Activated CD8-positive, alpha-beta memory T cell treated with anti-CD3 and anti-CD28 coated beads, Interleukin-2, amount 10 ng/mL, durations not matched to agents 7 days and 5 days (primary cell): ENCODE measurements at regions of chr5 and their contacts with region 1.

Region 1: GRCh38 chr5:32092938-32093812 is 80.9 kb downstream of the GOLPH3 start:
- DNase-seq: peak; percentile 78
- ATAC-seq: peak; percentile 93
- H3K4me3 Mint-ChIP-seq: no peak overlapping the region
- H3K27ac Mint-ChIP-seq: no peak overlapping the region
- H3K4me1 Mint-ChIP-seq: peaks cover 6% of the 10 kb centered on the region
- H3K27me3 Mint-ChIP-seq: no peaks in the 10 kb centered on the region

Region 2: GRCh38 chr5:31825518-31826068 is 267.6 kb before region 1 on chr5:
- CTCF ChIA-PET with region 1: interaction called, 21 read pairs
- DNase-seq: peak; percentile 51
- ATAC-seq: peak; percentile 64
- H3K4me3 Mint-ChIP-seq: no peak overlapping the region
- H3K27ac Mint-ChIP-seq: no peak overlapping the region
- H3K4me1 Mint-ChIP-seq: no peaks in the 10 kb centered on the region
- H3K27me3 Mint-ChIP-seq: peaks cover 10% of the 10 kb centered on the region

Region 3: DNA sequence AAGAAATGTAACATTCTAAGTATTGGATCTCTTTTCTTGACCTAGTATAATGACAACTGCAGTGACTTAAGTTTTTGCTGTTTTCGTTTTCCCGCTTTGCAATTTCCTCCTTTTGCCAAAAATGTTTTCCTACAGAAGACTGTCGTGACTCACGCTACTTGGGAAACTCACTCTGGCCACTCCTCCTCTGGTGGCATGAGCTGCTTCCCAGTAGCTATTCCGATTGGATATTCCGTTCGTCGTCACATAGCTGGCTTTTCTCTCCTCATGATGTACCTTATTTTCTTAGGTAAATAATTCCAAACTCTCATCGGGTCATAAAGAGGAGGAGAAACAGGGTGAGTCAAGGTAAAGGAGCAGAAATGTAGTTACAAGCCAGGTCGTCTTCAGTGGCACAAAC is 16.1 kb after region 1 on chr5:
- CTCF ChIA-PET with region 1: interaction called, 10 read pairs
- DNase-seq: no peak
- ATAC-seq: no peak
- H3K4me3 Mint-ChIP-seq: no peak overlapping the region
- H3K27ac Mint-ChIP-seq: no peak overlapping the region
- H3K4me1 Mint-ChIP-seq: peaks cover 2% of the 10 kb centered on the region
- H3K27me3 Mint-ChIP-seq: no peaks in the 10 kb centered on the region